Activated CD4-positive, alpha-beta T cell treated with anti-CD3 and anti-CD28 coated beads, Interleukin-2, amount 10 ng/mL, durations not matched to agents 7 days and 5 days (primary cell): ENCODE measurements at regions of chr6 and their contacts with region 1.

Region 1: DNA sequence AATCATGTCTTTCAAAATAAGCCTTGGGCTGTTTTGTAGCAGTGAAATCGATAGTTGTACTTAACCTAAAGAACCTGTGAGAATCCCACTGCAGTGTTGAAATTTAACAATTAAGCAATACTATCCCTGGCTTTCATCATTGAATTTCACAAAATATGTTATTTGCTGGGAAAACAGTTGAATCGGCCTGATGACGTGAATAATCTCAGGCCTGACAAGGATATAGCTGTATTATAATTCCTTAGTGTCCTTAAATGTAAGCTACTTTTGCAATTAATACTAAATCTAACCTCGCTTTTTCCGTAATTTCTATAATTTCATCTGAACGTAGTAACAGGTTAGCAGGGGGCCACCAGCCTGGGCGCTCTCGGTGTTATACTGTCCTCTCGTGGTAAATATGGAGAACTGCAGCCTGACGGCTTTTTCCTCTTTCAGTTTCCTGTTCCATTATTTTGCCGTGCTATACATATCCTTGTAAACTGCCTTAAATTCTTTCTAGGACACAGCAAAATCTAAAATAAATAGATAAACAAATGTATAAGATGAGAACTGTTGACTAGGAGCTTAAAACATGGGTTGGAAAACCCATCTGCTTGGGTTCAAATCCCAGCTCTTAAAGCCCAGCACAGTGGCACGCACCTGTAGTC is 24.0 kb downstream of the MTFR2 start:
- DNase-seq: peak; percentile 63
- H3K4me3 Mint-ChIP-seq: peak overlapping the region; percentile 20
- H3K27ac Mint-ChIP-seq: peak overlapping the region; percentile 38
- H3K4me1 Mint-ChIP-seq: peaks cover 9% of the 10 kb centered on the region
- H3K27me3 Mint-ChIP-seq: no peaks in the 10 kb centered on the region

Region 2: GRCh38 chr6:135506270-135506997 is 719.7 kb before region 1 on chr6:
- CTCF ChIA-PET with region 1: interaction called, 12 read pairs
- POLR2A ChIA-PET with region 1: no interaction called
- DNase-seq: peak; percentile 44
- H3K4me3 Mint-ChIP-seq: no peak overlapping the region
- H3K27ac Mint-ChIP-seq: no peak overlapping the region
- H3K4me1 Mint-ChIP-seq: peaks cover 4% of the 10 kb centered on the region
- H3K27me3 Mint-ChIP-seq: no peaks in the 10 kb centered on the region

Region 3: GRCh38 chr6:135675862-135676261 is 550.3 kb before region 1 on chr6:
- CTCF ChIA-PET with region 1: interaction called, 10 read pairs
- POLR2A ChIA-PET with region 1: no interaction called
- DNase-seq: peak; percentile 58
- H3K4me3 Mint-ChIP-seq: no peak overlapping the region
- H3K27ac Mint-ChIP-seq: peak overlapping the region; percentile 26
- H3K4me1 Mint-ChIP-seq: peaks cover 20% of the 10 kb centered on the region
- H3K27me3 Mint-ChIP-seq: no peaks in the 10 kb centered on the region

Region 4: GRCh38 chr6:136113736-136114173 is 112.4 kb before region 1 on chr6:
- CTCF ChIA-PET with region 1: no interaction called
- POLR2A ChIA-PET with region 1: no interaction called
- DNase-seq: no peak
- H3K4me3 Mint-ChIP-seq: no peak overlapping the region
- H3K27ac Mint-ChIP-seq: no peak overlapping the region
- H3K4me1 Mint-ChIP-seq: no peaks in the 10 kb centered on the region
- H3K27me3 Mint-ChIP-seq: peaks cover 3% of the 10 kb centered on the region

Region 5: DNA sequence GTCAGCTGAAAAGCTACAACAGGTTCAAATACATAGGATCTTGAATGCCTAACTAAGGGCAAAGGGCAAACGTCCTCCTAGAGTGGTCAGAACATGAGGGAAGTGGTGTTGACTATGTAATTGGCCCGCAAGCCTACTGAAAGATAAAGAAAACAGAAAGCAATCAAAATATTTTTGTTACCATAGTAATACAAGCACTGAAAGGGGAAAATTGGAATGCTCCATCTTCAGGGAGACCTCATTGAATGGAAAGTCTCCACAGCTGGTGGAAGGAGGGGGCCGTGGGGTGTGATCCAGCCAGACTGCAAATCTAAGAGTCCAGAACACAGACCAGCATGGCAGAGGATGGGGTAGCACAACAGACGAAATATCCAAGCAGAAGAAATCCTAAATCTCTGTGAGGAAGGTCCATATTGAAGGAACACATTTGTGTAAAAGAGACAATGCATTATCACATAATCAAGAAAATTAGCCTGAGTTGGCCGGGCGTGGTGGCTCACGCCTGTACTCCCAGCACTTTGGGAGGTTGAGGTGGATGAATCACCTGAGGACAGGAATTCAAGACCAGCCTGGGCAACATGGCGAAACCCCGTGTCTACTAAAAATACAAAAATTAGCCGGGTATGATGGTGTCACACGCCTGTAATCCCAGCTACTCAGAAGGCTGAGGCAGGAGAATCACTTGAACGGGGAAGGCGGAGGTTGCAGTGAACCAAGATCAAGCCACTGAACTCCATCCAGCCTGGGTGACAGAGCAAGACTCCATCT is 15.6 kb before region 1 on chr6:
- CTCF ChIA-PET with region 1: interaction called, 10 read pairs
- POLR2A ChIA-PET with region 1: no interaction called
- DNase-seq: no peak
- H3K4me3 Mint-ChIP-seq: no peak overlapping the region
- H3K27ac Mint-ChIP-seq: no peak overlapping the region
- H3K4me1 Mint-ChIP-seq: no peaks in the 10 kb centered on the region
- H3K27me3 Mint-ChIP-seq: peaks cover 2% of the 10 kb centered on the region

Region 6: DNA sequence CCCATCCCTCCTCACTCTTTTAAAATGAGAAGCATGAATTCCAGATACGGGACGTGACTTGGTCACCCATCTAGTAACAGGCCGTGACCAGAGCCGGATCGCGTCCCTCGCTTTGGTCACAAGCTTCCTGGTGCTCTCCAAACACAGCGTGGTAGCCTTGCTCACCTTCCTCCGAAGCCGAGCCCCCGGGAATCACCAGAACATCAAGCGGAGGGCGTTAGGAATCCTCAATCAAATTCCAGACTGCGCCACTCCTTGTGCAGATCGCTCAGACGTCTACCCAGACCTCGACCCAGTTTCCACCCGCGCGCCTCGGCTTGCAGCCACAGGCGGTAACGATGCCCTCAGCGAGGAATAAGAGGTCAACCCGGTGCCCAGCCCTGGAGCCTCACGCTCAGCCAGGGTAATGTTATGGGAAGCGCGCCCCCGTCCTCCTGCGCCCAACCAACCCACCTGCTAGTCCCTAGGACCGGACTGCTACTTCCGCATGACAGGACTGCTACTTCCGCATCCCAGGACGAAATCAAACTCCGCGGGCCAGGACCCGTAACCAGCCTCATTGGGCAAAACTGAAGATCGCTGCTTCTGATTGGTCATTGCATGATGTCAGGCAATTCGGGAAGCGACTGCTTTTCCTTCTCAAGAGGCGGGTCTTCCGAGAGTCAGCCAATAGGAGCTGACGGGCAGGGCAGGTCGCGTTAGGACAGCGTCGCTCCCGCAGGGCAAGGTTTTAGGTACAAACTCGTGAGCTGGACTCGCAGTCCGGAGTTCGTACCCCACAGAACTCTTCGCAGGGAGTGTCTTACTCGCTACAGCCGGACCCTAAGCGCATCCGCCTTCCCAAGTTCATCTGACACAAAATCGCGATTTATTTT is 23.9 kb after region 1 on chr6 and contains the start of gene MTFR2:
- CTCF ChIA-PET with region 1: interaction called, 10 read pairs
- POLR2A ChIA-PET with region 1: no interaction called
- DNase-seq: peak; percentile 99
- H3K4me3 Mint-ChIP-seq: peak within 1 kb of the TSS; percentile 89
- H3K27ac Mint-ChIP-seq: peak within 1 kb of the TSS; percentile 89
- H3K4me1 Mint-ChIP-seq: peaks cover 58% of the 10 kb centered on the region
- H3K27me3 Mint-ChIP-seq: no peaks in the 10 kb centered on the region
- total RNA-seq, gene MTFR2: 23.9 to 26.3 TPM

Region 7: DNA sequence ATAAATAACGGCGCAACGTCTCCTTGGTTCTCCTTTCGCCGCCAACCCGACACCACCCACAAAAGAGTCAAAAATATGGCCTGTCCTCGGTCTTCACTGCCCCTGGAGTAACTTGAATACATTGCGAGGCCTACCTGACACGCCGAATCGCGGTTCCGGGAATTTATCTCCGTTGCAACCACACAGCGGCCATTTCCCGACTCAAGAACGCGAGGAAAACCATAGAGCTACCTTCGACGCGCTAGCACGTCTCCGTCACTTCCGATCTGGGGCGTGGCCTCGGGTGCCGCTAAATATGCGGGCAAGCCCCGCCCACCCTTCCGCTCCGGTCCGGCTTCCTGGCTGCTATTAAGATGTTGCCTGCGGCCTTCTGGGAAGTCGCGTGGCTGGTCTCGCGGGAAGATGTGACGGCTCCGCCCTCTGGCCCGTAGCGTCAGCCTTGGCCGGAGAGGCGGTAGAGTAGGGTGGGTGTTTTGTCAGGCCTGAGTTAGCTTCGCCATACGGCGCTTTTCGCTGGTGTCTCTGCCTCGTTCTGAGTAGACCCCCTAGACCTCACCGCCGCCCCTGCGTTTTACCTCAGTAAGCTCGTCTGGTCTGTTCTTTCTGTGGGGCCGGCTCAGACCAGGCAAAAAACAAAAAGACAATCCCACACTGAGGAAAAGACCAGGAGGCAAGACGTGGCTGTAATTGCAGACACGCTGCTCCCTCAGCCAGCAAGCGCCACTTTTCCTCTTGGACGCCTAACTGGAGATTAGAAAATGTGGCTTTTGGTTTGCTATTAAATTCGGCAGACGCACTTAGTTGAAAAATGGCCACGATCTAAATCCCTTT is 63.6 kb after region 1 on chr6 and contains the start of gene BCLAF1:
- CTCF ChIA-PET with region 1: interaction called, 10 read pairs
- POLR2A ChIA-PET with region 1: no interaction called
- DNase-seq: peak; percentile 99
- H3K4me3 Mint-ChIP-seq: peak within 1 kb of the TSS; percentile 99
- H3K27ac Mint-ChIP-seq: peak within 1 kb of the TSS; percentile 100
- H3K4me1 Mint-ChIP-seq: peaks cover 50% of the 10 kb centered on the region
- H3K27me3 Mint-ChIP-seq: no peaks in the 10 kb centered on the region
- total RNA-seq, gene BCLAF1: 147 to 164 TPM